Activated T-helper 1 cell treated with anti-CD3 and anti-CD28 coated beads, Interleukin-12 subunit alpha, Interleukin-12 subunit beta, Interleukin-2, Interleukin-4 antibody, amounts not matched to agents 30 ng/mL and 10 ng/mL and 1 ng/mL, durations not matched to agents 14 hours and 24 hours and 36 hours (primary cell): ENCODE measurements at regions of chr17 and their contacts with region 1.

Region 1: GRCh38 chr17:46184696-46185095 is 8.5 kb downstream of the KANSL1 start:
- DNase-seq: no peak
- H3K4me3 Mint-ChIP-seq: no peak overlapping the region
- H3K27ac Mint-ChIP-seq: no peak overlapping the region
- H3K4me1 Mint-ChIP-seq: peaks cover 79% of the 10 kb centered on the region
- H3K27me3 Mint-ChIP-seq: peaks cover 1% of the 10 kb centered on the region

Region 2: DNA sequence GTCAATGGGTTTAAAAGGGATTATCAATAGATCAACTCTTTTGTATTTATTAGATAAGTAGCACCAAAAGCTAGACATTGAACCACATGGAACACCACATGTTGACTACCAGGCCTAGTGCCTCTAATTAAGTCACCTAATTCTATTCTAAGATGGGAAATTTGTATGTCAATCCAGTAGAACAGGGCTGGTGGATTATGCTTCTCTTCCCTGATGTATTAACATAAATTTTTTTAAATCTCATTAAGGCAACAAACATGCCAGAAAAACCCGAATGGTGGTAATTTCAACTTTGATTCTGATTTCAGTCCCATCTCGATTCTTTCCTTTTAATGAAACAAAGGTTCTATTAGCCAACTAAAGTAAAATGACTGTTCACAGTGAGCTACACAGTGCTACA is 84.1 kb before region 1 on chr17:
- intact Hi-C with region 1: loop called (anchors 5 kb)
- DNase-seq: no peak
- H3K4me3 Mint-ChIP-seq: no peak overlapping the region
- H3K27ac Mint-ChIP-seq: peak overlapping the region; percentile 77
- H3K4me1 Mint-ChIP-seq: peaks cover 54% of the 10 kb centered on the region
- H3K27me3 Mint-ChIP-seq: no peaks in the 10 kb centered on the region